ENCODE measurements at regions of chr9 and their contacts with region 1.

Region 1: DNA sequence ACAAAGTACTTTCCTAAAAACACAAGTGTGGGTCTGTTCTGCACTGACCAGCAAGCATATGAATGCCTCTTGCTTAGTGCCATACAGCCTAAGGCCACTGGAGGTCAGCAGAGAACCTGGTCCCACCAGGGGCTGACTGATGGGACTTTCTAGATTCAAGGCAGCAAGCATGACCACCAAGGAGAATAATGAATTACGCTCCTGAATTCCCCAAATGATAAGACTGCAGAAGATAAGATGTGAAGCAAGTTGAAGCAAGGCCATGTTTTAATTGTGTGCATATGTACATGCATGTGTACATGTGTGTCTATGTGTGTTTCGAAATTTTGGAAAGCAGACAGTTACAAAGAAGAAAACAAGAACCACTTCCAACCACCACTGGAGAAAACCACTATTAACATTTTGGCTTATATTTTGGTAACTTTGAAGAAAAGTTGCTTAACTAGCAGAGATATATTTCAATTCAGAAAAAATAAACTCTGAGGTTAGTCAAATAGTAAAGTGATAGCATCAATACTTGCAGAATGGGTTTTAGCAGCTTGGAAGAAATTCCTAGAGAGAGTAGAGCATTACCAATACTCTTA is 70.5 kb downstream of the ERP44 start:
- DNase-seq: peak; percentile 59
- ATAC-seq: peak; percentile 99
- H3K4me3 Mint-ChIP-seq: no peak overlapping the region
- H3K27ac Mint-ChIP-seq: no peak overlapping the region
- H3K4me1 Mint-ChIP-seq: peaks cover 32% of the 10 kb centered on the region
- H3K27me3 Mint-ChIP-seq: no peaks in the 10 kb centered on the region
- CTCF ChIP-seq: peak; percentile 39

Region 2: GRCh38 chr9:98998441-98999151 is 1029.7 kb before region 1 on chr9:
- CTCF ChIA-PET with region 1: no interaction called
- POLR2A ChIA-PET with region 1: no interaction called
- intact Hi-C with region 1: loop called (anchors 10 kb)
- DNase-seq: peak; percentile 57
- ATAC-seq: peak; percentile 74
- H3K4me3 Mint-ChIP-seq: no peak overlapping the region
- H3K27ac Mint-ChIP-seq: no peak overlapping the region
- H3K4me1 Mint-ChIP-seq: peaks cover 21% of the 10 kb centered on the region
- H3K27me3 Mint-ChIP-seq: peaks cover 2% of the 10 kb centered on the region
- CTCF ChIP-seq: peak; percentile 67

Region 3: DNA sequence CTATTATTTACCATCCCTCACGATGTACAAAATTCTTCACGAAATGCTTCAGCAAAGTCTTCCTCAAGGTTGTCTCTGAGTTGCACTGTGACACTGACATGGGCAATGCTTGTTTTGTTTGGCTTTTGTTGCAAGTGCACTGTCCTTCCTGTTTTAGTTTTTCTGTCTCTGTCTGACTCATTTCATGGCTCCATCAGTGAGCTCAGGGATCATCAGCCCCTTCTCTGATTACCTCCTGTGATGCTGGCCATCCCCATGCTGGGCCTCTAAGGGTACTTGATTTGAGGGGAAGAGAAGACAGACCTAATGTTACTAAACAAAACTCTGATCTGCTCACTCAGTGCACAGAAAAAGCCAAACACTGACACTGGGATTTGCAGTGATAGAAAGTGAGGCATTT is 159.4 kb before region 1 on chr9:
- CTCF ChIA-PET with region 1: no interaction called
- POLR2A ChIA-PET with region 1: no interaction called
- intact Hi-C with region 1: no loop called
- DNase-seq: no peak
- ATAC-seq: no peak
- H3K4me3 Mint-ChIP-seq: no peak overlapping the region
- H3K27ac Mint-ChIP-seq: no peak overlapping the region
- H3K4me1 Mint-ChIP-seq: no peaks in the 10 kb centered on the region
- H3K27me3 Mint-ChIP-seq: no peaks in the 10 kb centered on the region
- CTCF ChIP-seq: no peak

Region 4: GRCh38 chr9:100058699-100059579 is 30.6 kb after region 1 on chr9:
- CTCF ChIA-PET with region 1: interaction called, 4 read pairs
- POLR2A ChIA-PET with region 1: no interaction called
- intact Hi-C with region 1: loop called (anchors 2 kb)
- DNase-seq: no peak
- ATAC-seq: peak; percentile 77
- H3K4me3 Mint-ChIP-seq: peak overlapping the region; percentile 67
- H3K27ac Mint-ChIP-seq: peak overlapping the region; percentile 72
- H3K4me1 Mint-ChIP-seq: peaks cover 51% of the 10 kb centered on the region
- H3K27me3 Mint-ChIP-seq: no peaks in the 10 kb centered on the region
- CTCF ChIP-seq: no peak

Region 5: DNA sequence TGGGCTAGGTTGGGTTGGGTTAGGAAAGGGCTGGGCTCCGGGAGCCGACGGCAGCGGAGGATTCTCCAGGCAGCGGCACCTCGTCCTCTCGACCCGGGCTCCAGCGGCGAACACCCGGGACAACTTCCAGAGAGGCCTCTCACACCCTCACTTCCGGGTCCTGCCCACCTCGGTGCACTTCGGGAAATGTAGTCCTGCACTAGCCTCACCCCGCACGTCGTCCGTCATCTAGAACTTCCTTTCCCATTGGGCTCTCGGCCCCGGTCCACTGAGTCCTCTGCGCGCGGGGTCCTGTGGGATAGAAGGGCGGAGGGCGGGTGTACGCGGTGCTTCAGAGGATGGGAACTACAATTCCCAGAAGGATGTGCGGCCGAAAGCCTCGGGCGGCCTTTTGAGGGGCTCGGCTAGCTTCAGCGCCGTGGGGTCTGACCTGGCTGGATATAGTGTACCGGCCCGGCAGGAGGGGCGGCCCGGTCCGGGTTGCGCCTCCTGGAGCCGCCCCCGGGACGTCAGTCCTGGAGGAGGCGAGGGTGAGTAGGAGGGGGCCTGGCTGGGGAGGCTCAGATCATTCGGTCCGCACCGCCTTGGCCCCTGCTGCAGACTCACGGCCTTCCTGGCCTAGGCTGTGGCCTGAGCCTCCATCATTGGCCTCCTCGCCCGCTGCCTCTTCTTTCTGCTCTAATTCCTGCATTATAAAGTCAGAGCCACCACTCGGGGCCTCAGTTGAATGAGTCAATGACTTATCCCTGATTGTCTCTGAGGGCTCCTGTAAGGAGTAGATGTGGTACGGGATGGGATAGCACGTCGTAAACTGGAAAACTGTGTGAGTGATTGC is 70.8 kb after region 1 on chr9 and contains the starts of genes ERP44 and INVS:
- CTCF ChIA-PET with region 1: interaction called, 3 read pairs
- POLR2A ChIA-PET with region 1: no interaction called
- intact Hi-C with region 1: loop called (anchors 1 kb)
- DNase-seq: peak; percentile 86
- ATAC-seq: peak; percentile 99
- H3K4me3 Mint-ChIP-seq: peak within 1 kb of the TSS; percentile 100
- H3K27ac Mint-ChIP-seq: peak within 1 kb of the TSS; percentile 97
- H3K4me1 Mint-ChIP-seq: peaks cover 42% of the 10 kb centered on the region
- H3K27me3 Mint-ChIP-seq: no peaks in the 10 kb centered on the region
- CTCF ChIP-seq: no peak
- total RNA-seq, gene ERP44: 14.8 and 16.5 TPM in 2 replicates
- total RNA-seq, gene INVS: 26.7 and 34.0 TPM in 2 replicates

Region 6: GRCh38 chr9:100322954-100323536 is 294.8 kb after region 1 on chr9:
- CTCF ChIA-PET with region 1: interaction called, 14 read pairs
- POLR2A ChIA-PET with region 1: no interaction called
- intact Hi-C with region 1: loop called (anchors 1 kb)
- DNase-seq: no peak
- ATAC-seq: no peak
- H3K4me3 Mint-ChIP-seq: no peak overlapping the region
- H3K27ac Mint-ChIP-seq: no peak overlapping the region
- H3K4me1 Mint-ChIP-seq: peaks cover 2% of the 10 kb centered on the region
- H3K27me3 Mint-ChIP-seq: no peaks in the 10 kb centered on the region
- CTCF ChIP-seq: no peak

Region 7: GRCh38 chr9:100598641-100599145 is 570.4 kb after region 1 on chr9:
- CTCF ChIA-PET with region 1: no interaction called
- POLR2A ChIA-PET with region 1: no interaction called
- intact Hi-C with region 1: loop called (anchors 1 kb)
- DNase-seq: peak; percentile 73
- ATAC-seq: peak; percentile 91
- H3K4me3 Mint-ChIP-seq: peak overlapping the region; percentile 81
- H3K27ac Mint-ChIP-seq: no peak overlapping the region
- H3K4me1 Mint-ChIP-seq: peaks cover 18% of the 10 kb centered on the region
- H3K27me3 Mint-ChIP-seq: no peaks in the 10 kb centered on the region
- CTCF ChIP-seq: no peak